CD14-positive monocyte (primary cell): ENCODE measurements at regions of chr3 and their contacts with region 1.

Region 1: GRCh38 chr3:117019082-117019713 is 309.6 kb downstream of the TUSC7 start:
- DNase-seq: peak; percentile 58 to 68 (median 62)
- H3K4me3 ChIP-seq: peak overlapping the region in 1 of 3 experiments; percentile 41
- H3K4me3 Mint-ChIP-seq: peak overlapping the region; percentile 31 to 59
- H3K27ac ChIP-seq: no peak overlapping the region
- H3K27ac Mint-ChIP-seq: no peak overlapping the region
- H3K4me1 ChIP-seq: peaks cover 7 to 10% of the 10 kb centered on the region in 2 donors
- H3K4me1 Mint-ChIP-seq: peaks cover 23% of the 10 kb centered on the region
- H3K27me3 ChIP-seq: peaks cover 0 to 8% of the 10 kb centered on the region in 2 donors
- H3K27me3 Mint-ChIP-seq: peaks cover 0 to 12% (median 9%) of the 10 kb centered on the region in 3 donors
- CTCF ChIP-seq: peak; percentile 86

Region 2: GRCh38 chr3:117045143-117045868 is 26.1 kb after region 1 on chr3:
- intact Hi-C with region 1: no loop called
- DNase-seq: no peak
- H3K4me3 ChIP-seq: no peak overlapping the region
- H3K4me3 Mint-ChIP-seq: peak overlapping the region in 1 of 2 donors; percentile 11
- H3K27ac ChIP-seq: peak overlapping the region in 1 of 2 donors; percentile 46
- H3K27ac Mint-ChIP-seq: peak overlapping the region in 5 of 7 donors; percentile 1 to 64 (median 56)
- H3K4me1 ChIP-seq: peaks cover 10 to 11% of the 10 kb centered on the region in 2 donors
- H3K4me1 Mint-ChIP-seq: peaks cover 8% of the 10 kb centered on the region
- H3K27me3 ChIP-seq: no peaks in the 10 kb centered on the region
- H3K27me3 Mint-ChIP-seq: no peaks in the 10 kb centered on the region
- CTCF ChIP-seq: peak; percentile 9

Region 3: GRCh38 chr3:117059067-117059955 is 40.1 kb after region 1 on chr3:
- intact Hi-C with region 1: no loop called
- DNase-seq: peak in 2 of 3 donors; percentile 12 to 15
- H3K4me3 ChIP-seq: no peak overlapping the region
- H3K4me3 Mint-ChIP-seq: no peak overlapping the region
- H3K27ac ChIP-seq: no peak overlapping the region
- H3K27ac Mint-ChIP-seq: no peak overlapping the region
- H3K4me1 ChIP-seq: peaks cover 58 to 63% of the 10 kb centered on the region in 2 donors
- H3K4me1 Mint-ChIP-seq: peaks cover 40% of the 10 kb centered on the region
- H3K27me3 ChIP-seq: no peaks in the 10 kb centered on the region
- H3K27me3 Mint-ChIP-seq: peaks cover 0 to 2% (median 1%) of the 10 kb centered on the region in 3 donors
- CTCF ChIP-seq: peak; percentile 72

Region 4: GRCh38 chr3:117355566-117355965 is 336.4 kb after region 1 on chr3:
- intact Hi-C with region 1: loop called in 1 of 2 experiments (anchors 5 kb)
- DNase-seq: peak in 2 of 3 donors; percentile 1 to 7
- H3K4me3 ChIP-seq: no peak overlapping the region
- H3K4me3 Mint-ChIP-seq: no peak overlapping the region
- H3K27ac ChIP-seq: no peak overlapping the region
- H3K27ac Mint-ChIP-seq: no peak overlapping the region
- H3K4me1 ChIP-seq: no peaks in the 10 kb centered on the region
- H3K4me1 Mint-ChIP-seq: no peaks in the 10 kb centered on the region
- H3K27me3 ChIP-seq: no peaks in the 10 kb centered on the region
- H3K27me3 Mint-ChIP-seq: no peaks in the 10 kb centered on the region
- CTCF ChIP-seq: peak; percentile 32

Region 5: GRCh38 chr3:117526470-117527079 is 507.4 kb after region 1 on chr3:
- intact Hi-C with region 1: loop called (anchors 5 kb)
- DNase-seq: peak; percentile 13 to 32 (median 23)
- H3K4me3 ChIP-seq: no peak overlapping the region
- H3K4me3 Mint-ChIP-seq: no peak overlapping the region
- H3K27ac ChIP-seq: no peak overlapping the region
- H3K27ac Mint-ChIP-seq: no peak overlapping the region
- H3K4me1 ChIP-seq: no peaks in the 10 kb centered on the region
- H3K4me1 Mint-ChIP-seq: no peaks in the 10 kb centered on the region
- H3K27me3 ChIP-seq: peaks cover 0 to 6% of the 10 kb centered on the region in 2 donors
- H3K27me3 Mint-ChIP-seq: peaks cover 0 to 2% (median 0%) of the 10 kb centered on the region in 3 donors
- CTCF ChIP-seq: peak; percentile 73